Posterior vena cava (tissue), 2 donors: ENCODE measurements at regions of chr9 and their contacts with region 1.

Region 1: DNA sequence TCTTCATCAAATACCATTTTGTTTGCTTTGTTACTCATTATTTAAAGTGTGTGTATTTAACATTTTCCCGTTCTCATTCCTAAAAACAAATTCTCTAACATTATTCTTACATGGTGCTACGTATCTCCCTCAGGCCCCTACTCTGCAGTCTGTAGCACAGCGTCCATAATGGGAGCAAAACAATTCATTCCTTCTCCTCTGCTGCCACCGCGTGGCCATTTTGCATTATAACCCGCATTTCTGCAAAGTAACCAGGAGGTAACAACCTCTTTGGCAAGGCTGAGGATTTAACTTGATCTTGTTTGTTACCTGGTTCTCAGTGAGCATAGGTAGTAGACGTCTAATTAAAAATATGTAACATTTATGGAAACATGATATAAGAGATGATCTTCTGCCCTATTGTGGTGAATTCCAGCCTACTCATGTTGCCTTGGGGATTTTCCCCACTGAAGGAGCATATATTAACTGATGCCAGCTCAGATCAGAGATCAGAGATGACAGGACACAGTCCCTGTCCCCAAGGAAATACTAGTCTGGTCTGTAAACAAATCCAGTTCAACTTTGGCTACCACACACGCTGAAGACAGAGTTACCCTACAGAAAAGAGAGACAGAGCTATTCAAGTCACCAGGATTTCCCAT is 10.5 kb downstream of the OR1K1 start:
- DNase-seq: peak; percentile 92

Region 2: DNA sequence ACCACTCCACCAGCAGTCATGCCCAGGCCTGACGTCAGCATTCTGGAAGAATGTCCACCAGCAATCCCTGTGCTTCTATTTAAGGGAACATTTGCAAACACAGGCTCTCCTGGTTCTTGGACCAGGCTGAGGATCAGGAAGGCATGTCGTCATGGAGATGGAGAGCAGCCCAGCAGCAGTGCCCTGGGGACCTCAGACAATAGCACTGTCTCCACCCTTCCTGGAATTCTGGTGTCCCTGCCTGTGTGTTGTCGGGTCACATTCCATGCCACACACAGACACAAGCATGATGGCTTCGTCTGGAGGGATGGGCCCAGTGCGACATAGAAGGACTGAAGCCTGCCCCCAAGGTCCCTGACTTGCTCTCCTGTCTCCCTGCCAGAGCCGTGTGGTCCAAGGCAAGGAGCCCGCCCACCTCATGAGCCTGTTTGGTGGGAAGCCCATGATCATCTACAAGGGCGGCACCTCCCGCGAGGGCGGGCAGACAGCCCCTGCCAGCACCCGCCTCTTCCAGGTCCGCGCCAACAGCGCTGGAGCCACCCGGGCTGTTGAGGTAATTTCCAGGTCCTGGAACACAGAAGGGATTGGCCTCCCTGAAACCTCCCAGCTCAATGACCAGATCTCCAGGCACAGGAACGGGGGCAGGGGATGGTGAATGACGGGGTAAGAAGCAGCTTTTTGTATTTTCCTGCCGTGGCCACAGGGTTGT is 1484.1 kb before region 1 on chr9:
- intact Hi-C with region 1: no loop called
- DNase-seq: peak; percentile 98

Region 3: GRCh38 chr9:122464633-122465567 is 345.5 kb before region 1 on chr9:
- intact Hi-C with region 1: loop called (anchors 2 to 10 kb)
- DNase-seq: no peak